IMR-90 (cell line): ENCODE measurements at regions of chr14 and their contacts with region 1.

Region 1: DNA sequence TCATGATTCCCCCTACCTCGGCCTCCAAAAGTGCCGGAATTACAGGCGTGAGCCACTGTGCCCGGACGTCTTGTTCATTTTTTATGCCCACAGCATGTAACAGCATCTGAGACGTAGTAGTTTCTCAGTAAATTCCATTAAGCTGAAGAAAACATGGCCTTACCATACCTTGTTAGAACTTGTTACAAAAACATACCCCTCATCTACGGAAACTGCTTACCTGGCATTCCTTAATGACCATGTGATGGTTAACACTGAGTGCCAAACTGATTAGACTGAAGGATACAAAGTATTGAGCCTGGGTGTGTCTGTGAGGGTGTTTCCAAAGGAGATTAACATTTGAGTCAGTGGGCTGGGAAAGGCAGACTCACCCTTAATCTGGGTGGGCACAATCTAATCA is 186.8 kb downstream of the CEP128 start:
- DNase-seq: no peak
- ATAC-seq: no peak
- H3K4me3 ChIP-seq: no peak overlapping the region
- H3K27ac ChIP-seq: no peak overlapping the region
- H3K4me1 ChIP-seq: no peaks in the 10 kb centered on the region
- H3K27me3 ChIP-seq: no peaks in the 10 kb centered on the region
- CTCF ChIP-seq: no peak
- POLR2A ChIP-seq: no peak
- RAD21 ChIP-seq: no peak

Region 2: DNA sequence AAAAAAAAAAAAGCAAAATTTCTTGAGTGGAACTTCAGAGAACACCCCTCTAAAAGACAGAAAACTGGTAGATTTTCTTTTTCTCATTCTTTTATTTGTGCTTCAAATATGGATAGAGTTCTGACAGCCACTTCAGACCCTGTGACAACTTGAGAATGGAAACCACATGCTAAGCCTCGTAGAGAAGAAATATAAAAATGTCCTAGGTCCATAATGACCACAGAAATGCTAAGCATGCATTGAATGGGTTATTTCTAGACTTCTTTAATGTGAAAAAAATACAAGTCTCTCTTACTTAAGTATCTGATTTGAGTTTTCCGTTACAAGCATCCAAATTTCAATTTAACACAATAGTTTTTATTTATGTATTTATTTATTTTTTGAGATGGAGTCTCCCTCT is 515.1 kb before region 1 on chr14:
- CTCF ChIA-PET with region 1: no interaction called
- POLR2A ChIA-PET with region 1: no interaction called
- dilution Hi-C with region 1: no loop called
- in situ Hi-C with region 1: no loop called
- intact Hi-C with region 1: no loop called
- DNase-seq: no peak
- ATAC-seq: no peak
- H3K4me3 ChIP-seq: no peak overlapping the region
- H3K27ac ChIP-seq: no peak overlapping the region
- H3K4me1 ChIP-seq: no peaks in the 10 kb centered on the region
- H3K27me3 ChIP-seq: no peaks in the 10 kb centered on the region
- CTCF ChIP-seq: no peak
- POLR2A ChIP-seq: no peak
- RAD21 ChIP-seq: no peak

Region 3: GRCh38 chr14:80699861-80700260 is 54.8 kb before region 1 on chr14:
- CTCF ChIA-PET with region 1: no interaction called
- POLR2A ChIA-PET with region 1: no interaction called
- dilution Hi-C with region 1: no loop called
- in situ Hi-C with region 1: no loop called
- intact Hi-C with region 1: loop called (anchors 2 kb)
- DNase-seq: no peak
- ATAC-seq: no peak
- H3K4me3 ChIP-seq: no peak overlapping the region
- H3K27ac ChIP-seq: no peak overlapping the region
- H3K4me1 ChIP-seq: no peaks in the 10 kb centered on the region
- H3K27me3 ChIP-seq: no peaks in the 10 kb centered on the region
- CTCF ChIP-seq: no peak
- POLR2A ChIP-seq: no peak
- RAD21 ChIP-seq: no peak